Activated B cell treated with CpG ODN at 0.5 μM for 24 hours (primary cell): ENCODE measurements at regions of chr7 and their contacts with region 1.

Region 1: GRCh38 chr7:54299426-54299825 is 242.7 kb upstream of the VSTM2A start:
- DNase-seq: no peak
- ATAC-seq: no peak
- H3K4me3 Mint-ChIP-seq: no peak overlapping the region
- H3K27ac Mint-ChIP-seq: no peak overlapping the region
- H3K4me1 Mint-ChIP-seq: no peaks in the 10 kb centered on the region
- H3K27me3 Mint-ChIP-seq: no peaks in the 10 kb centered on the region
- CTCF ChIP-seq: no peak

Region 2: DNA sequence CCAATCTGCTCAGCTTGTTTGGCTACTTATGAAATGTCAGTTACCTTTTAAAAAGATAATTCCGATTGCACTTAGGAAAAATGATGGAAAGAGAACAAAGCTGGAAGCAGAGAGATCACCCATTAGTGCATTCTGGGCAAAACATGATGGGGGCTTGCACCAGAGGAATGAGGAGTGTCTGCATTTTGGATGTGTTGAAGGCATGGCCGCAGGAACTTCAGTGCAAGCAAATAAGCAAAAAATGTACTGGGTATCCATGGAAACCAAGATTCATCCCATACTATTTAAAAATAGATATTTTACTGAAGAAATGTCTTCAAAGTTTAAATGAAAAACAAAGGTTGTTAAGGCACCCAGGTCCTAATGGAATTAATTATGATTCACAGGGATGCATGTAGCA is 609.0 kb before region 1 on chr7:
- CTCF ChIA-PET with region 1: no interaction called
- POLR2A ChIA-PET with region 1: no interaction called
- intact Hi-C with region 1: no loop called
- DNase-seq: no peak
- ATAC-seq: no peak
- H3K4me3 Mint-ChIP-seq: no peak overlapping the region
- H3K27ac Mint-ChIP-seq: no peak overlapping the region
- H3K4me1 Mint-ChIP-seq: no peaks in the 10 kb centered on the region
- H3K27me3 Mint-ChIP-seq: no peaks in the 10 kb centered on the region
- CTCF ChIP-seq: no peak

Region 3: DNA sequence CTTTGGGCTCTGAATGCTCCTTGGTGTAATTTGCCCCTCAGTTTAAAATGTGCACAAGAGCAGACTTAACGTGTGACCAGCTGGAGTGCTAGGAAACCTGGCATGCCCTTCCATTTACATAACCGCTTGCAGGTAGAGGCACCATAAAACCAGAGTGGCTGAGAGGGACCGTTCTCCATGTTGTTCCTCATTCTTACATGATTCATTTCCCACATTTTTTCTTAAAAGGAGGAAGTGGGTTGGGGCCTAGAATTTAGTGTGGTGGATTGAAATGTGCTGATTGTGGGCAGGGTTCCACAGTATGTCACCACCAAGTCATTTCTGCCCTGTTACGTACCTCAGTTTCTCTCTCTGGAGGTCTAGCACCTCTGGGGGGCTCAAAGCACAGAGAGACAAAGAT is 133.0 kb before region 1 on chr7:
- CTCF ChIA-PET with region 1: no interaction called
- POLR2A ChIA-PET with region 1: no interaction called
- intact Hi-C with region 1: no loop called
- DNase-seq: no peak
- ATAC-seq: no peak
- H3K4me3 Mint-ChIP-seq: no peak overlapping the region
- H3K27ac Mint-ChIP-seq: no peak overlapping the region
- H3K4me1 Mint-ChIP-seq: no peaks in the 10 kb centered on the region
- H3K27me3 Mint-ChIP-seq: no peaks in the 10 kb centered on the region
- CTCF ChIP-seq: no peak

Region 4: GRCh38 chr7:54201501-54201900 is 97.9 kb before region 1 on chr7:
- CTCF ChIA-PET with region 1: no interaction called
- POLR2A ChIA-PET with region 1: no interaction called
- intact Hi-C with region 1: loop called (anchors 5 kb)
- DNase-seq: no peak
- ATAC-seq: no peak
- H3K4me3 Mint-ChIP-seq: no peak overlapping the region
- H3K27ac Mint-ChIP-seq: no peak overlapping the region
- H3K4me1 Mint-ChIP-seq: no peaks in the 10 kb centered on the region
- H3K27me3 Mint-ChIP-seq: no peaks in the 10 kb centered on the region
- CTCF ChIP-seq: no peak

Region 5: DNA sequence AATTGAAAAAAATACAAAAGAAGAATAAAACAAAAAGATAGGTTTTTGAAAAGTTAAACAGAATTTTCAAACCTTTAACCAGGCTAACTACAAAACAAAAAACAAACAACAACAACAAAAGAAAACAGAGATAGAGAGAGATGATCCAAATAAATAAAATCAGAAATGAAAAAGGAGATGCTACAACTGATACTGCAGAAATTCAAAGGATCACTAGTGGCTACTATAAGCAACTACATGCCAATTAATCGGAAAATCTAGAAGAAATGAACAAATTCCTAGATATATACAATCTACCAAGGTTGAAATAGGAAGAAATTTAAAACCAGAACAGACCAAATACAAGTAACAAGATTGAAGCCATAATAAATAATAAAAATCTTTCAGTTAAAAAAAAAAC is 84.0 kb before region 1 on chr7:
- CTCF ChIA-PET with region 1: no interaction called
- POLR2A ChIA-PET with region 1: no interaction called
- intact Hi-C with region 1: loop called (anchors 5 kb)
- DNase-seq: no peak
- ATAC-seq: no peak
- H3K4me3 Mint-ChIP-seq: no peak overlapping the region
- H3K27ac Mint-ChIP-seq: no peak overlapping the region
- H3K4me1 Mint-ChIP-seq: no peaks in the 10 kb centered on the region
- H3K27me3 Mint-ChIP-seq: no peaks in the 10 kb centered on the region
- CTCF ChIP-seq: no peak